PC-9 (cell line): ENCODE measurements at regions of chr7 and their contacts with region 1.

Region 1: GRCh38 chr7:30062591-30062990 is 34.4 kb downstream of the PLEKHA8 start:
- DNase-seq: peak in 1 of 2 experiments; percentile 53
- H3K4me3 ChIP-seq: no peak overlapping the region
- H3K27ac ChIP-seq: no peak overlapping the region
- H3K4me1 ChIP-seq: peaks cover 4% of the 10 kb centered on the region
- H3K27me3 ChIP-seq: no peaks in the 10 kb centered on the region
- CTCF ChIP-seq: peak; percentile 89

Region 2: GRCh38 chr7:29408841-29409243 is 653.7 kb before region 1 on chr7:
- CTCF ChIA-PET with region 1: no interaction called
- POLR2A ChIA-PET with region 1: no interaction called
- intact Hi-C with region 1: loop called (anchors 5 kb)
- DNase-seq: peak; percentile 55 to 77
- H3K4me3 ChIP-seq: no peak overlapping the region
- H3K27ac ChIP-seq: no peak overlapping the region
- H3K4me1 ChIP-seq: peaks cover 19% of the 10 kb centered on the region
- H3K27me3 ChIP-seq: peaks cover 4% of the 10 kb centered on the region; the same call in 1 of the 2 replicates
- CTCF ChIP-seq: peak; percentile 99

Region 3: DNA sequence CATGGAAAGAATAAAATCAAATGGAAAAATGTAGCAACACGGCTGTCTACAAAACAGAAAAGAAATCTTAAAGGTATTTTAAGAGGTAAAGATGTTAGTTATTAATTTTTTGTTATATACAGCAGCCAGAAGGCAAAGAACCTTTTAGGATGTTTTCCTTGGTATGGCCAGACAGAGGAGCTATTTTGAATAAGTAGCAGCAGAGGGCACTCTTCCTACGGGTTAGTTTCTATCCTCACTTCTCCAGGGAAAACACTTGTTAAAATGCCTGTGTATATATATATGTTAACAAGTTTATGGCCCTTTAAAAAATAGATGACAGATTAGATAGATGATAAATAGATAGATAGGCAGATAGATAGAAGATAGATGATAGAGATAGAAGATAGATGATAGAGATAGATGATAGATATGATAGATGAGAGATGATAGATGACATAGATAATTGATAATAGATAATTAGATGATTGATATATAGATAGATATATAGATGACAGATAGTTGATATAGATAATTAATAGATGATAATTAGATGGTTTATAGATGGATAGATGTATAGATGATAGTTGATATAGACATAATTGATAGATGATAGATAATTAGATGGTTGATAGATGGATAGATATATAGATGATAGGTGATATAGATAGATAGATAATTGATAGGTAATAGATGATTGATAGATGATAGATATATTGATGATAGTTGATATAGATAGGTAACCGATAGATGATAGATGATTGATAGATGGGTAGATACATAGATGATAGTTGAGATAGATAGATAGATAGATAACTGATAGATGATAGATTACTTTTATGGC is 314.1 kb before region 1 on chr7:
- CTCF ChIA-PET with region 1: interaction called, 3 read pairs
- POLR2A ChIA-PET with region 1: no interaction called
- intact Hi-C with region 1: loop called (anchors 5 kb)
- DNase-seq: peak in 1 of 2 experiments; percentile 69
- H3K4me3 ChIP-seq: no peak overlapping the region
- H3K27ac ChIP-seq: no peak overlapping the region
- H3K4me1 ChIP-seq: peaks cover 4% of the 10 kb centered on the region; the same call in 1 of the 2 replicates
- H3K27me3 ChIP-seq: no peaks in the 10 kb centered on the region
- CTCF ChIP-seq: peak; percentile 85

Region 4: DNA sequence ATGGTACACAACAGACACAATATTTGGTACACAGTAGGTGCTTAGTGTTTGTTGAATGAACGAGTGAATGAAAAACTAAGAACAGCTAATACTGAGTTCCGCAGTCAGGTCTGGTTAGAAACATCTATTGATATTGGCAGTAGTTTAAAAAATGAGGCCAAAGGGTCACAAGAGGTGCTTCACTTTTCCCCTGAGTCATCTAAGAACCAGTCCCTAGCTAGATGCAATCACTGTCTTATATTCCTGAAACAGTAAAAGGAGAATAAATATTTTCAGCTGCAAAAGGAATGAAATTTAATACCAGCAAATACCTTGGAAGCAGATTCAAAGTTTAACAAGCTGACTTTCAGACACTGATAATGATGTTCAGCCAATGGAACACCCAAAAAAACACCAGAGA is 127.5 kb before region 1 on chr7:
- CTCF ChIA-PET with region 1: no interaction called
- POLR2A ChIA-PET with region 1: no interaction called
- intact Hi-C with region 1: loop called (anchors 5 kb)
- DNase-seq: peak in 1 of 2 experiments; percentile 69
- H3K4me3 ChIP-seq: no peak overlapping the region
- H3K27ac ChIP-seq: peak overlapping the region; percentile 67
- H3K4me1 ChIP-seq: peaks cover 12% of the 10 kb centered on the region
- H3K27me3 ChIP-seq: no peaks in the 10 kb centered on the region
- CTCF ChIP-seq: no peak

Region 5: GRCh38 chr7:30091491-30091912 is 28.9 kb after region 1 on chr7:
- CTCF ChIA-PET with region 1: no interaction called
- POLR2A ChIA-PET with region 1: interaction called, 13 read pairs
- intact Hi-C with region 1: no loop called
- DNase-seq: peak in 1 of 2 experiments; percentile 84
- H3K4me3 ChIP-seq: no peak overlapping the region
- H3K27ac ChIP-seq: peak overlapping the region; percentile 40
- H3K4me1 ChIP-seq: peaks cover 16% of the 10 kb centered on the region
- H3K27me3 ChIP-seq: no peaks in the 10 kb centered on the region
- CTCF ChIP-seq: no peak